Mucosa of descending colon (tissue), 3 donors: ENCODE measurements at regions of chr13 and their contacts with region 1.

Region 1: GRCh38 chr13:98445340-98446233 is 131.3 kb downstream of the STK24 start:
- DNase-seq: peak; percentile 77 to 87 (median 85)
- ATAC-seq: peak; percentile 85
- H3K4me3 ChIP-seq: no peak overlapping the region
- H3K4me1 ChIP-seq: peaks cover 8% of the 10 kb centered on the region
- CTCF ChIP-seq: peak; percentile 95

Region 2: GRCh38 chr13:98014766-98015165 is 430.8 kb before region 1 on chr13:
- intact Hi-C with region 1: no loop called
- DNase-seq: no peak
- ATAC-seq: no peak
- H3K4me3 ChIP-seq: no peak overlapping the region
- H3K4me1 ChIP-seq: no peaks in the 10 kb centered on the region
- CTCF ChIP-seq: no peak

Region 3: GRCh38 chr13:98345536-98345935 is 100.1 kb before region 1 on chr13:
- intact Hi-C with region 1: no loop called
- DNase-seq: peak in 1 of 3 donors; percentile 9
- ATAC-seq: peak; percentile 25
- H3K4me3 ChIP-seq: no peak overlapping the region
- H3K4me1 ChIP-seq: no peaks in the 10 kb centered on the region
- CTCF ChIP-seq: no peak

Region 4: GRCh38 chr13:98576963-98577822 is 131.6 kb after region 1 on chr13 and contains the start of gene STK24:
- intact Hi-C with region 1: loop called in 1 of 2 experiments (anchors 10 kb)
- DNase-seq: peak; percentile 77 to 88 (median 79)
- ATAC-seq: peak; percentile 78
- H3K4me3 ChIP-seq: peak within 1 kb of the TSS; percentile 94
- H3K4me1 ChIP-seq: peaks cover 33% of the 10 kb centered on the region
- CTCF ChIP-seq: no peak
- total RNA-seq, gene STK24: 190 to 210 (median 204) TPM

Region 5: DNA sequence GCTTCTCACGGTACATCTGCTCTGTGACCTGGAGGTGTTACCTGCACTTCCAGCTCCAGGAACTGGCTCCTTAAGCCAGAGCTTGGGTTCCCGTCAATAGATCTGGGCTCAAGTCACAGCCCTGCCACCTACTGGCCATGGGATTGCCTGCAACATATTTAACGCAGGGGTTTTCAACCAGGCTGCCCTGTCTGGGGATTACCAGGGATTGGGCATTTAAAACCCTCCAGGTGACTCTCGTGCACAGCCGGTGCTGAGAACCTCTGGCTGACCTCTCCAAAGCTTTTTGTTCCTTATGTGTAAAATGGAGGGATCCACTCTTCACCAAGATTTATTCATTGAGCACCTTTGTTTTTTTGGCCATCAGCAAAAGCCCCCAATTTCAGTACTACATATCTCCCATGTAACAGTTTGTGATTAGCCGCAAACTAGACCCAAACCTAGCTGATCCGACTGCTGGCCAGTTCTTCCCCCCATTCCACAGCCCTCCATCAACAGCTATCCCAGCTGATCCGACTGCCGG is 207.9 kb after region 1 on chr13:
- intact Hi-C with region 1: loop called (anchors 5 to 10 kb)
- DNase-seq: peak; percentile 64 to 95 (median 85)
- ATAC-seq: peak; percentile 75
- H3K4me3 ChIP-seq: no peak overlapping the region
- H3K4me1 ChIP-seq: peaks cover 23% of the 10 kb centered on the region
- CTCF ChIP-seq: peak; percentile 94

Region 6: DNA sequence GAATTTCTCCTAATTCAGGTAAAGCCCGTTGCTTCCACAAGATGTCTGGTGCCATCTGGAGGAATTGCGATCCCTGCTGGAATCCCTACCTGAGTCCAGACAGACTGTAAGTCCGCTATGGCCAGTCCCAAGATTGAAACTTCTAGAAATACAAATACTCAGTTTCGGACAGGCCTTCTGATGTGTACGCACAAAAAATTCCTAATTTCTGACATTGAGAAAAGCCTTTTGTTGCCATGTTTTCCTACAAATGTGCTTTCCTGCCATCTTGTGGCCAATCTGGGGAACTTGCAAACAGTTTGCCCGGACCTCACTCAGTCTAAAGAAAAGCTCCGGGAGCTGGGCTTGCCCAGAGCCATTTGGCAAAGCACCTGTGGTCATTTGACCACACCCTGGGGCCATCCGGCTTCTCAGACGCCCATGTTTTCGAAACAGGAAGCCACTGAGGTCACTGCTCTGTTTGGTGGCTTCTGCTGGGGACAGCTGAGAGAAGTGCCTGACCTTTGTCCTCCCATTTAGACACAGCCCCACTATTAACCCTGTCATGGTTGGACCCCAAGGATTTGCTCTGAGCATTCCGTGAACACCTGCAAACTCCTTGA is 227.5 kb after region 1 on chr13:
- intact Hi-C with region 1: no loop called
- DNase-seq: peak; percentile 77 to 81 (median 78)
- ATAC-seq: peak; percentile 94
- H3K4me3 ChIP-seq: no peak overlapping the region
- H3K4me1 ChIP-seq: peaks cover 11% of the 10 kb centered on the region
- CTCF ChIP-seq: peak; percentile 72

Region 7: GRCh38 chr13:98775844-98776598 is 330.4 kb after region 1 on chr13:
- intact Hi-C with region 1: no loop called
- DNase-seq: peak; percentile 74 to 84 (median 81)
- ATAC-seq: peak; percentile 97
- H3K4me3 ChIP-seq: no peak overlapping the region
- H3K4me1 ChIP-seq: peaks cover 4% of the 10 kb centered on the region
- CTCF ChIP-seq: no peak